Sigmoid colon (tissue), 7 donors: ENCODE measurements at regions of chr3 and their contacts with region 1.

Region 1: GRCh38 chr3:97658668-97659285 is 105.8 kb upstream of the ARL6 start:
- DNase-seq: no peak
- H3K4me3 ChIP-seq: no peak overlapping the region
- H3K27ac ChIP-seq: no peak overlapping the region
- H3K4me1 ChIP-seq: no peaks in the 10 kb centered on the region
- H3K27me3 ChIP-seq: no peaks in the 10 kb centered on the region
- CTCF ChIP-seq: peak in 2 of 4 experiments; percentile 30 to 53
- EP300 ChIP-seq: no peak
- POLR2A ChIP-seq: no peak

Region 2: DNA sequence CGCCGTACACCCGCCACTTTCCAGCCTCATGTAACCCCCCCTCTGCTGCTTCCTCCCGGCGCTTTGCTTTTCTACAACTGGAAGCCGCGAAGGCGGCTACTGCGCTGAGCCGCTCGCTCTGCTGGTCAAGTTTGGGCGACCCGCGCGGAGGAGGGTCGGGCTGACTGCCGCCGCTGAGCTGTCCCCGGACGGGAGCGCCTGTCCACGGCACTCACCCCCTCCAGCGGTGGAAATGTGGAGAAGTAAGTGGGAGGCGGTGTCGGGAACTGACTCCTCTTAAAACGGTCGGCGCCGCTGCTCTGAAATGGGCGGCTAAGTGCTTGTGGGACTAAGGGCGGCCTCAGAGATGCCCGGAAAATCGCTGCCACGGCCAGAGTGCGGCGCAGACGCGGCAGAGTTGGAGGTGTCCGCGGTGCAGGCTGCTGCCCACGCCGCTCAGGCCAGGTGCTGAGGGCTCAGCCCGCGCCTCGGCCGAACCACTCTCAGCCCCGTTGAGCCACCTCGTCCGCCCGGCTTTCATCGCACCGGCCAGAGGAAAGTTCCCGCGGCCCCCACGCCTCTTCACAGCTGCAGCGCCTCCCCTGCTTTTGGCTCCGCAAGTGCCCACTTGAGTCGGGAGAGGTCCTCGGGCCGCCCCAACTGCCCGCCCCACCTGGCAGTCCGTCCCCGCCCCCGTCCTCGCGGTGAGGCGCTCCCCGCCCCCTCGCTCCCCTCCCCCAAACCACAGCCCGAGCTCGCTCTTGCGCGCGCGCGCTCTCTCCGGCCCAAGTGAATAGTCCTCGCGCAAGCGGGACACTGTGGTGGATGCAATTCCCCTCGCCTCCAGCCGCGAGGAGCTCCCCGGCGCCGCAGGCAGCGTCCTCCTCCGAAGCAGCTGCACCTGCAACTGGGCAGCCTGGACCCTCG is 844.7 kb before region 1 on chr3 and contains the start of gene EPHA6:
- intact Hi-C with region 1: loop called (anchors 2 kb)
- DNase-seq: peak; percentile 84
- H3K4me3 ChIP-seq: peak within 1 kb of the TSS; percentile 67 to 84 (median 74)
- H3K27ac ChIP-seq: peak within 1 kb of the TSS; percentile 79 to 93 (median 90)
- H3K4me1 ChIP-seq: peaks cover 0 to 30% (median 8%) of the 10 kb centered on the region in 4 donors
- H3K27me3 ChIP-seq: peaks cover 0 to 5% (median 0%) of the 10 kb centered on the region in 3 donors
- CTCF ChIP-seq: peak in 2 of 4 experiments; percentile 12 to 34
- EP300 ChIP-seq: no peak
- POLR2A ChIP-seq: no peak
- total RNA-seq, gene EPHA6: 39.3 to 53.5 (median 47.6) TPM